ENCODE measurements at regions of chr1 and their contacts with region 1.

Region 1: DNA sequence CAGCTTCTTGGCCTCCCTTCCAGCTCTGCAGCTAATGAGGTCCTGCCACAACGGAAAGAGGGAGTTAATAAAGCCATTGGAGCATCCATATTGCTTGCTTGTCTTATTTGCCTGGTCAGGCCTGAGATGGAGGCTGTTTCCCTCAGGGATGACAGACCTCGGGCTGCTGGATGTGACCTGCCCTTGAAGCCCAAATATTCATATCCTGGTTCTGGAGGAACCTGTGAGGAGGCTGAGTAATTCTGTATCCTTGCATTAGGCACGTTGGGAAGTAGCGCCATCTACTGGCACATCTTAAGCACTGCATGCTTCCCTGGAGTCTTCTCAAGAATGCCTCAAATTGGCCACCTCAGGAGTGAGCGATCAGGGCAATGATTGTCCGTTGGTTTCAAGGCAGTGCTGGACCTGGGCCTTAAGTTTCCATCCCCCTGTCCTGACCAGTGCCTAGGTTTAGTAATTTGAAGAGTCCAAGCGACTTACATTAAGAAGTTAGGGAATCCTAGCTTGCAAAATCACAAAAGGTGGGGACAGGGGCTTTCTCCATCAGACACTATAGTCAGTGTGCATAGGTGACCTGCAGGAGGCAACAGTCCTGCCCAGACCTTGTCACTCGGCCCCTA is 13.8 kb upstream of the NASP start:
- DNase-seq: peak; percentile 87
- H3K4me3 Mint-ChIP-seq: no peak overlapping the region
- H3K27ac Mint-ChIP-seq: peak overlapping the region; percentile 34
- H3K4me1 Mint-ChIP-seq: peaks cover 2% of the 10 kb centered on the region
- H3K27me3 Mint-ChIP-seq: no peaks in the 10 kb centered on the region

Region 2: GRCh38 chr1:45254490-45254889 is 315.6 kb before region 1 on chr1:
- CTCF ChIA-PET with region 1: no interaction called
- intact Hi-C with region 1: no loop called
- DNase-seq: no peak
- H3K4me3 Mint-ChIP-seq: no peak overlapping the region
- H3K27ac Mint-ChIP-seq: no peak overlapping the region
- H3K4me1 Mint-ChIP-seq: no peaks in the 10 kb centered on the region
- H3K27me3 Mint-ChIP-seq: peaks cover 2% of the 10 kb centered on the region

Region 3: DNA sequence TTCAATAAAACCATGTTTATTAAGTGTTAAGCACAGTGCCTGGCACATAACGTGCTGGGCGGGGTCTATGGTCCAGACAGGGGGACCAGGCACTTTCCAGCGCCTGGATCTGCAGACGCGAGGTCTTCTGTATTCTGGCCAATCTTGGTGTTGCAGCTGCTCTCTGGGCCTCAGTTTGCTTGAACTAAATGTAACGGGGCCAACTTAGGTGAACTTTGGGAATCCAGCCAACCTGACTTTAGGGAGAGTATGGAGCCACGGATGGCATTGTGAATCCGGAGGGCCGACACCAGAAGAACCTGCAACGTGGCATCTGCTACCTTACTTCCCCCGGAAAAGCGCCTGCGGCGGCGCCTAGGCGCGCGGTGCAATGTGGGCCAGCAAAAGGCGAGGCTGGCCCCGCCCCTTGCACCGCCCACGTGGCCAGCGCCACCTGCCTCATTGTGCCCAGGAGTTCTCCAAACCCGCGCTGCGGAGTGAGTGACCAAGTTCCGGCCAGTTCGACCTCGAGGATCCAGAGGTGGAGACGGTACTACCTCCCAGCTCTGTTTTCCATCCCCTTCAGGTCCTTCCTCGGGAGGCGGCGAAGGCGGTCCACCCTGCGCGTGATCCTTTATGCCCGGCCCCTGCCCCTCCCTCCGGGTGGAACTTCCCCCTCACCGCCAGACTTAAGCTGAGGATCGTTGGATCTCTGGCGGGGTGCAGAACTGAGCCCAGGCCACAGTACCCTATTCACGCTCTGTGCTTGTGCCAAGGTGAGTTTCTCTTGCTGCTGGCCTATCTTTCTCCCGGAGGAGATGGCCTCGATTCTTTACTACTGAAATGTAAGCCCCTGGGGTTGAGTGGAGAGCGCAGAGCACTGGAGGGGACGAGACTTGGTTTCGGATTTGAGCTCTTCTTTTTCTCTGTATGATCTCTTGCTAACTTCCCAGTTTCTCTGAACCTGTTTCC is 19.4 kb before region 1 on chr1 and contains the start of gene AKR1A1:
- CTCF ChIA-PET with region 1: interaction called, 21 read pairs
- intact Hi-C with region 1: no loop called
- DNase-seq: peak; percentile 93
- H3K4me3 Mint-ChIP-seq: peak within 1 kb of the TSS; percentile 96
- H3K27ac Mint-ChIP-seq: peak within 1 kb of the TSS; percentile 94
- H3K4me1 Mint-ChIP-seq: peaks cover 19% of the 10 kb centered on the region
- H3K27me3 Mint-ChIP-seq: no peaks in the 10 kb centered on the region
- total RNA-seq, gene AKR1A1: 207 to 217 TPM